A673 (cell line): ENCODE measurements at regions of chr10 and their contacts with region 1.

Region 1: DNA sequence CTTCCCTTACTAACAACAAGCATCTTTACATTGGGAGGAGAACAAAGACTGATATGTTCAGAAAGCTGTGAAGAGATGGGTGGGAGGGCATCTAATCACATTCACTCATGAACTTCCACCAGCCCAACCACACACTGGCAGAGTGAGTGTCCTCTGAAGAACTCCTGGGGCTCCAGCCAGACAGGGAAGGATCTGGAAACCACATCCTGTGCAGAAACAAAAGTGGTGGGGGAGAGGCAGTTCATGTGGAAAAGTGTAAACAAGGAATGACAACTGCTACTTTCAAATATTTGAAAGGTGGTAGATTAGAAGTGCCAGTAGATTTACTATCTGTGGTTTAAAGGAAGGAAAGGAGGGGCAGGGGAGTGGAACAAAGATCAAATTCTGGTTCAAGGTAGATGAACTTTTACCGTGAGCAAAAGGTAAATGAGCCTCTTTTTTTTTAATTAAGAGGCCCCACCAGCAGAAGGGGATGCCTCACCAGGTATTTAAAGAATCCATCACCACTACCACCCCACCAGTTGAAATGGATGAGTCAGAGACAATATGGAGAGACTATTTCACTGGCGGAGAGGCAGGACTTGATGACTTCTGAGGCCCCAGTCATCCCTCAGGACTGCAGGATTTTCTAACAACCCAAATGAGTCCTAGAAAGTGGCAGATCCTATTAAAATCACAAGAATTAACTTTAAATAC is 34.5 kb downstream of the GOT1 start:
- DNase-seq: no peak
- H3K4me3 ChIP-seq: no peak overlapping the region
- H3K27ac ChIP-seq: no peak overlapping the region
- H3K4me1 ChIP-seq: no peaks in the 10 kb centered on the region
- H3K27me3 ChIP-seq: no peaks in the 10 kb centered on the region
- CTCF ChIP-seq: no peak

Region 2: DNA sequence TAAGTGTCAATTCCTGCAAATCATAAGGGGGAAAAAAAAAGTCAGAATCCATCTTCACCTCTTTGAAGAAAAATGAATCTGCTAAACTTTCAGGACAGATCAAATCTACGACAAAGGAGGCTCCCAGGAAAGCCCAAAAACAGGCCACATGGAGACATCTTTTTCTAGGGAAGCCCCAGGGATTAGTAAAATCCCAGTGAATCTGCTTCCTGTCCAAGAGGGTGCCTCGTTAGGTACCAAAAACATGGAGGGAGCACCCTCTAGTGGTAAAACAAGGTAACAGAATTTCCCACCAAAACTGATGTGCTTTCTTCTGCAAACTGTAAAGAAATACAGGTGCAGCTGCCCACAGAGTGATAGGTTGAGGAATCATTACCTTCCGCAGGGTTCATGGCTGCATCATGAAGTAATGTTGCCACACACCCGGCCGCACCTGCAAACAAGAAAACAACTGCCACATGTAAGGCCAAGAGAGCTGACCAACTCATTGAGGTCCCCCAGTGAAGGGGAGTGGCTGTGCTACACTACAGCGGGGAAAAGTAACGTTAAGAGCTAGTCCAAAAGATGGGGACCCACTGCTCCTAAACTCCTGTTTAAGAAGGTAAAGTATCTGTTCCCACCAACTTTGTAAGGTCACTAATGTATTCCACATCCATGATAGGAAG is 216.4 kb after region 1 on chr10:
- CTCF ChIA-PET with region 1: no interaction called
- POLR2A ChIA-PET with region 1: no interaction called
- intact Hi-C with region 1: loop called (anchors 1 kb)
- DNase-seq: peak; percentile 84
- H3K4me3 ChIP-seq: no peak overlapping the region
- H3K27ac ChIP-seq: no peak overlapping the region
- H3K4me1 ChIP-seq: peaks cover 4% of the 10 kb centered on the region
- H3K27me3 ChIP-seq: no peaks in the 10 kb centered on the region
- CTCF ChIP-seq: peak; percentile 84

Region 3: GRCh38 chr10:99711129-99711719 is 315.3 kb after region 1 on chr10:
- CTCF ChIA-PET with region 1: no interaction called
- POLR2A ChIA-PET with region 1: no interaction called
- intact Hi-C with region 1: loop called (anchors 2 kb)
- DNase-seq: peak; percentile 60
- H3K4me3 ChIP-seq: no peak overlapping the region
- H3K27ac ChIP-seq: no peak overlapping the region
- H3K4me1 ChIP-seq: no peaks in the 10 kb centered on the region
- H3K27me3 ChIP-seq: no peaks in the 10 kb centered on the region
- CTCF ChIP-seq: peak; percentile 66

Region 4: GRCh38 chr10:100401631-100402328 is 1005.9 kb after region 1 on chr10:
- CTCF ChIA-PET with region 1: no interaction called
- POLR2A ChIA-PET with region 1: no interaction called
- intact Hi-C with region 1: no loop called
- DNase-seq: no peak
- H3K4me3 ChIP-seq: no peak overlapping the region
- H3K27ac ChIP-seq: no peak overlapping the region
- H3K4me1 ChIP-seq: no peaks in the 10 kb centered on the region
- H3K27me3 ChIP-seq: no peaks in the 10 kb centered on the region
- CTCF ChIP-seq: no peak